CD4-positive, alpha-beta memory T cell (primary cell): ENCODE measurements at regions of chr3 and their contacts with region 1.

Region 1: DNA sequence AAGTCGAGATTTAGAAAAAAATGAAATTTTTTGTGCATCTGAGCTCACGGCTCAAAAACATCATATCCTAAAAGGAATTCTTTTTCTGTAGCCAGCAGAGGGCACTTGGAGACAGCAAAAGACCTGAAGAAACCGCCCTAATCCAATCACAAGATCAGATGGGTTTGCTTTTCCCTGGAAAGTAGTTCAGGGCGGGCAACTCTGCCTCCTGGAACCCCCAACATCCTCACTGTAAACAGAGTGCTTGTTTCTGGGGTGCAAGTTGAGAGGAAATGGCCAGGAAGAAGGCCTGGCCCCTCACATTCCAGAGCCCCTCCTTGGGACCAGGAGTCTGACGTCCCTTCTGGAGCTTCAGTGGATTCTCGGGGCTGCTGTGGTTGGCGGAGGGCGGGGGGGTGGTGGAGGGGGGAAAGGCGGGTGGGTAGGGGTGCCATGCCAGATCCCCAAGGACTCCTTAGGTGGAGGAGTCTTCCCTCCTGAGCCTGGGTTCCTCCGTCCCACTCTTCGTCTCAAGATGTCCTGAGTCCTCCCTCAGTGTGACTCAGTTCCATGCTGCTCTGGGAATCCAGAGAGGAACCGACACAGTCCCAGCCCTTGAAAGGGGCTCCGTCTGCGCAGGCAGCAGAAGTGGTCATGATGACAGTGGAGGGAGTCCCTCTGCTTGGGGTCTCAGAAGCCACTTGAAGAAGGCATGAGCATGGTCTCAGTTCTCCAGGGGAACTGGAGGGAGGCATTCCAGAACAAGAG is 35.9 kb downstream of the CCK start:
- DNase-seq: no peak
- H3K4me3 ChIP-seq: no peak overlapping the region
- H3K4me3 Mint-ChIP-seq: no peak overlapping the region
- H3K27ac ChIP-seq: no peak overlapping the region
- H3K27ac Mint-ChIP-seq: peak overlapping the region in 1 of 7 donors; percentile 67
- H3K4me1 ChIP-seq: no peaks in the 10 kb centered on the region
- H3K4me1 Mint-ChIP-seq: no peaks in the 10 kb centered on the region
- H3K27me3 ChIP-seq: peaks cover 5% of the 10 kb centered on the region
- H3K27me3 Mint-ChIP-seq: peaks cover 13 to 19% of the 10 kb centered on the region in 2 donors

Region 2: GRCh38 chr3:42118762-42119361 is 111.3 kb before region 1 on chr3:
- CTCF ChIA-PET with region 1: interaction called, 4 read pairs
- POLR2A ChIA-PET with region 1: no interaction called
- intact Hi-C with region 1: loop called (anchors 2 kb)
- DNase-seq: no peak
- H3K4me3 ChIP-seq: no peak overlapping the region
- H3K4me3 Mint-ChIP-seq: no peak overlapping the region
- H3K27ac ChIP-seq: no peak overlapping the region
- H3K27ac Mint-ChIP-seq: peak overlapping the region in 3 of 7 donors; percentile 37 to 61 (median 43)
- H3K4me1 ChIP-seq: no peaks in the 10 kb centered on the region
- H3K4me1 Mint-ChIP-seq: peaks cover 13 to 17% (median 16%) of the 10 kb centered on the region in 4 donors
- H3K27me3 ChIP-seq: no peaks in the 10 kb centered on the region
- H3K27me3 Mint-ChIP-seq: no peaks in the 10 kb centered on the region

Region 3: DNA sequence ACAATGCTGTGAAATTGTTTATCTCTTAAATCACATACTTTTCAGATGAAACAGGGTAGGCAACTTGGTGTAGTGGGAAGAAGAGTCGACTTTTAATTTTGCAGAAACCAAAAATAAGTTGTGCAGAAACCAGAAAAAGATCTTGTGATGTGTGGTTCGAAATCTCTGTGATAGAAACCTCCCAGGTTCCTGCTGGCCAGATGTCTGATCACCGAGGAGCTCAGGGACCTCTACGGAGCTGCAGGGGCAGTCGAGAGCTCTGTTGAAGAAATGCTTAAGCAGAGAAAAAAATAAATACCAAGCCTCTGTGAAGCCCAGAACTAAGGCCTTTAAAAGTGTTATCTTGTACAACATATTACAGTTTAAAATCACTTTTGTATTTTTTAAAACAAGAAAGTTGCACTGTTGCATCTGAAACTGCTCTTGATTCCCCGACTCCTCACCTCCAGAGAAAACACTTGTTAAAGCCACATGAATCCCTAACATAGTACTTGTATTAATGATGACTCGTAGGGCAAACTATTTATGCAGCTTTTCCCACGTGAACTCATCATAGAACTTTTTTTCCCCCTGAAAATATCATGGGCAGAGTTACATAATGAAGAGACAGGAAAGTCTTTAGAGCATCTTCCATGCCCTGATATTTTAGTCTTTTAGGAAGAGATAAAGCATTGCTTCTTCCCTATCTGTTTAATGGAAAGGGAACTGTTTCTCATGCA is 15.4 kb before region 1 on chr3:
- CTCF ChIA-PET with region 1: no interaction called
- POLR2A ChIA-PET with region 1: no interaction called
- intact Hi-C with region 1: no loop called
- DNase-seq: no peak
- H3K4me3 ChIP-seq: no peak overlapping the region
- H3K4me3 Mint-ChIP-seq: peak overlapping the region in 2 of 8 donors; percentile 20 to 31
- H3K27ac ChIP-seq: no peak overlapping the region
- H3K27ac Mint-ChIP-seq: peak overlapping the region; percentile 6 to 91 (median 51)
- H3K4me1 ChIP-seq: peaks cover 52% of the 10 kb centered on the region
- H3K4me1 Mint-ChIP-seq: peaks cover 39 to 55% (median 49%) of the 10 kb centered on the region in 4 donors
- H3K27me3 ChIP-seq: no peaks in the 10 kb centered on the region
- H3K27me3 Mint-ChIP-seq: no peaks in the 10 kb centered on the region